ENCODE measurements at regions of chr2 and their contacts with region 1.

Region 1: GRCh38 chr2:102592597-102592996 is 26.8 kb upstream of the SLC9A2 start:
- DNase-seq: peak; percentile 36
- H3K4me3 ChIP-seq: no peak overlapping the region
- H3K27ac ChIP-seq: no peak overlapping the region
- H3K4me1 ChIP-seq: no peaks in the 10 kb centered on the region
- H3K27me3 ChIP-seq: peaks cover 12 to 20% of the 10 kb centered on the region in 2 experiments
- CTCF ChIP-seq: peak; percentile 38 to 52
- POLR2A ChIP-seq: no peak

Region 2: GRCh38 chr2:102487761-102488466 is 104.7 kb before region 1 on chr2:
- CTCF ChIA-PET with region 1: no interaction called
- POLR2A ChIA-PET with region 1: no interaction called
- dilution Hi-C with region 1: loop called (anchors 25 kb)
- intact Hi-C with region 1: no loop called
- DNase-seq: peak; percentile 4
- H3K4me3 ChIP-seq: no peak overlapping the region
- H3K27ac ChIP-seq: no peak overlapping the region
- H3K4me1 ChIP-seq: no peaks in the 10 kb centered on the region
- H3K27me3 ChIP-seq: peaks cover 9 to 11% of the 10 kb centered on the region in 2 experiments
- CTCF ChIP-seq: no peak
- POLR2A ChIP-seq: no peak

Region 3: GRCh38 chr2:102520028-102520427 is 72.6 kb before region 1 on chr2:
- CTCF ChIA-PET with region 1: interaction called, 3 read pairs
- POLR2A ChIA-PET with region 1: no interaction called
- dilution Hi-C with region 1: no loop called
- intact Hi-C with region 1: loop called (anchors 1 kb)
- DNase-seq: peak; percentile 24
- H3K4me3 ChIP-seq: no peak overlapping the region
- H3K27ac ChIP-seq: no peak overlapping the region
- H3K4me1 ChIP-seq: no peaks in the 10 kb centered on the region
- H3K27me3 ChIP-seq: peaks cover 0 to under 1% of the 10 kb centered on the region in 2 experiments
- CTCF ChIP-seq: peak; percentile 54 to 66
- POLR2A ChIP-seq: no peak

Measured in endothelial cell of umbilical vein (primary cell).